Activated T-helper 1 cell treated with anti-CD3 and anti-CD28 coated beads, Interleukin-12 subunit alpha, Interleukin-12 subunit beta, Interleukin-2, Interleukin-4 antibody, amounts not matched to agents 30 ng/mL and 10 ng/mL and 1 ng/mL, durations not matched to agents 14 hours and 24 hours and 36 hours (primary cell): ENCODE measurements at regions of chr11 and their contacts with region 1.

Region 1: GRCh38 chr11:34051349-34052035 is at the start of gene CAPRIN1:
- DNase-seq: peak; percentile 80
- H3K4me3 Mint-ChIP-seq: peak within 1 kb of the TSS; percentile 99
- H3K27ac Mint-ChIP-seq: peak within 1 kb of the TSS; percentile 97
- H3K4me1 Mint-ChIP-seq: peaks cover 8% of the 10 kb centered on the region
- H3K27me3 Mint-ChIP-seq: no peaks in the 10 kb centered on the region
- total RNA-seq, gene CAPRIN1: 285 and 289 TPM in 2 replicates

Region 2: DNA sequence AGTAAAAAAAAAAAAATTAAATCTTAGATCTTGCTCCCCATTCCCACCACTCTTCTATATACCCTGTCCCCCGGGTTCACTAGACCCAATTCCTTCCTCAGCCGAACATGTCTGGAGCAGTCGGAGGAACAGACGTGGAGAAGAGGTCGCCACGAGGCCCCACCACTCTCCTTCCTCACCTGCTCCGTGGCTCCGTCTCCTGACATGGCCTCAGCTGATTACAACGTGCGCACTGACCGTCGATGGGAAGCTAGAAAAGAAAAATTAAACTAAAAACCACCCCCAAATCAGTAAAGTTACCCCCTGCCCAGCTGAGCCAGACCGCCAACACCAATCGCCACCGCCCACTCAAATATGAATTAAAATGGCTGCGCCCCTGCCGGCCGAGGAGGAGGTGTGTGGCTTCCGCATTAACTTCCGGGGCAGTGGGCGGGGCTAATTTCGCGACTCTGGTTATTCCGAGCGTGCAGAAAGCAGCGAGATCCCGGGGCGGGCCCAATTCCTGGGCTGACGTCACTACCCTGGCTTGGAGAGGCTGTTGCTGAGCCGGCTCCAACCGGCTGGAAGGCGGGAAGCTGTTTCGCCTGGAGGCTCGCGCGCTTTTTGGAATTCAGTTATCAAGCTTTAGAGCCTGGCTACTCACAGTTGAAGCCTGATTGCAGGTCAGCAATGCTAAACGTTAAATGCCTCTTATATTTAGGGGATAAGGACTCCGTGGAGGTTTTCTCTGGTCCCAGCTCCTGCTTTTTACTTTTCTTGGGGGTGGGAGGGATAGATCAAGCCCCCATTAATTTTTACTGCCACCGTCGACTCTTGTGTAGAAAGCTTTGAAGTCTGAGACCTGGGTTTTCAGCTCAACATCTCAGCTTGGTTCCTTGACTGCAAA is 890.1 kb before region 1 on chr11 and contains the start of gene CSTF3:
- intact Hi-C with region 1: loop called (anchors 5 kb)
- DNase-seq: peak; percentile 91
- H3K4me3 Mint-ChIP-seq: peak within 1 kb of the TSS; percentile 100
- H3K27ac Mint-ChIP-seq: peak within 1 kb of the TSS; percentile 100
- H3K4me1 Mint-ChIP-seq: peaks cover 40% of the 10 kb centered on the region
- H3K27me3 Mint-ChIP-seq: no peaks in the 10 kb centered on the region
- total RNA-seq, gene CSTF3: 34.9 and 36.5 TPM in 2 replicates

Region 3: GRCh38 chr11:33773987-33774735 is 277.3 kb before region 1 on chr11 and contains the start of gene FBXO3:
- intact Hi-C with region 1: loop called (anchors 1 kb)
- DNase-seq: peak; percentile 80
- H3K4me3 Mint-ChIP-seq: peak within 1 kb of the TSS; percentile 94
- H3K27ac Mint-ChIP-seq: peak within 1 kb of the TSS; percentile 91
- H3K4me1 Mint-ChIP-seq: peaks cover 37% of the 10 kb centered on the region
- H3K27me3 Mint-ChIP-seq: peaks cover 29% of the 10 kb centered on the region
- total RNA-seq, gene FBXO3: 18.6 and 24.3 TPM in 2 replicates

Region 4: GRCh38 chr11:33996498-33997454 is 54.7 kb before region 1 on chr11:
- intact Hi-C with region 1: loop called (anchors 1 kb)
- DNase-seq: peak; percentile 67
- H3K4me3 Mint-ChIP-seq: peak overlapping the region; percentile 8
- H3K27ac Mint-ChIP-seq: no peak overlapping the region
- H3K4me1 Mint-ChIP-seq: peaks cover 12% of the 10 kb centered on the region
- H3K27me3 Mint-ChIP-seq: peaks cover 46% of the 10 kb centered on the region

Region 5: GRCh38 chr11:34234086-34234740 is 182.7 kb after region 1 on chr11:
- intact Hi-C with region 1: loop called (anchors 1 kb)
- DNase-seq: peak; percentile 80
- H3K4me3 Mint-ChIP-seq: peak overlapping the region; percentile 50
- H3K27ac Mint-ChIP-seq: peak overlapping the region; percentile 85
- H3K4me1 Mint-ChIP-seq: peaks cover 61% of the 10 kb centered on the region
- H3K27me3 Mint-ChIP-seq: peaks cover 12% of the 10 kb centered on the region

Region 6: DNA sequence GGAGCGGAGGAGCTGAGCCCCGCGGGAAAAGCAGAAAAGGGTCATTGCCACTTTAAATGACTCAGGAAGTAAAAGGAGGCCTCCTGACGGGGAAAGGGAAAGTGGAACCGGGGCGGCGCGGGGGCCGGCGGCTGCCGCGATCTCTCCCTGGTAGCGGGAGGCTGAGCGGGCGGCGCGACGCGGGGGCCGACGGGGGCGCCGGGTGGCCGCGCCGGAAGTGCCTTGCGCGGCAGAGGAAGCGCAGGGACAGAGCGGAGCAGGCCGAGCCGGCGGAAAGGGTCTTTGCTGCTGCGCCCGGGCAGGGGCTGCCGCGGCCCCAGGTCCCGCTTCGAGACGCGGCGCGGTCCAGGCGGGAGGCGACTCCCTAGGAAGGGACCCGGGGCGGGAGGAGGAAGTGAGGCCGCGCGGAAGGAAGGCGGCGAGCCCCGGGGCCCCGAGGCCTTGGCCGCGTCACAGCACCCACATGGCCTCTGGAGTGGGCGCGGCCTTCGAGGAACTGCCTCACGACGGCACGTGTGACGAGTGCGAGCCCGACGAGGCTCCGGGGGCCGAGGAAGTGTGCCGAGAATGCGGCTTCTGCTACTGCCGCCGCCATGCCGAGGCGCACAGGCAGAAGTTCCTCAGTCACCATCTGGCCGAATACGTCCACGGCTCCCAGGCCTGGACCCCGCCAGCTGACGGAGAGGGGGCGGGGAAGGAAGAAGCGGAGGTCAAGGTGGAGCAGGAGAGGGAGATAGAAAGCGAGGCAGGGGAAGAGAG is 1611.3 kb after region 1 on chr11 and contains the start of gene TRIM44:
- intact Hi-C with region 1: loop called (anchors 10 kb)
- DNase-seq: peak; percentile 79
- H3K4me3 Mint-ChIP-seq: peak within 1 kb of the TSS; percentile 89
- H3K27ac Mint-ChIP-seq: peak within 1 kb of the TSS; percentile 93
- H3K4me1 Mint-ChIP-seq: peaks cover 33% of the 10 kb centered on the region
- H3K27me3 Mint-ChIP-seq: peaks cover 18% of the 10 kb centered on the region
- total RNA-seq, gene TRIM44: 24.3 and 27.6 TPM in 2 replicates